Endothelial cell of umbilical vein (primary cell): ENCODE measurements at regions of chr2 and their contacts with region 1.

Region 1: DNA sequence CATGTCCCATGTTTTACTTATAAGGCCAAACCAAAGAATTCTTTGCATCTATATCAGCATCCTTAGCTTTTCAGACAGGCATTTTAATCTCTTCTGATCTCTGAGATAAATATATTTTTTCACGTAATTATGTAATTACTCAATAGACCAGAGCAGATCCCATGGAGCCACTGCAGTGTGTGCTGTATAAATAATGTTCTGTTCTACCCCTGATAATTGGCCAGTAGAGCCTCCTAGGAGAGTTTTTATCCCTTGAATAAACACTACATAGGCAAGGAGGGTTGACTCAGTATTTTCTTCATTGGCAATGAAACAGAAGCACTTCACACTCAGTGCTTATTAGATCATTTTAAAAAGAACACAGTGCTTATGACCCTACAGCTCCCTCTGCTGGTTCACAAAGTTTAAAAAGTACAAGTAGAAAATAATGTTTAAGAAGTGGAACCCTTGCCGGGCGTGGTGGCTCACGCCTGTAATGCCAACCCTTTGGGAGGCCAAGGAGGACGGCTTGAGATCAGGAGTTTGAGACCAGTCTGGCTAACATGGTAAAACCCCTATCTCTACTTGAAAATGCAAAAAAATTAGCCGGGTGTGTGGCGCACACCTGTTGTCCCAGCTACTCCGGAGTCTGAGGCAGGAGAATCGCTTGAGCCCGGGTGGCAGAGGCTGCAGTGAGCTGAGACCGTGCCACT is 91.9 kb downstream of the PPP1R1C start:
- DNase-seq: peak; percentile 84
- H3K4me3 ChIP-seq: no peak overlapping the region
- H3K27ac ChIP-seq: no peak overlapping the region
- H3K4me1 ChIP-seq: peaks cover 3% of the 10 kb centered on the region
- H3K27me3 ChIP-seq: no peaks in the 10 kb centered on the region
- CTCF ChIP-seq: peak; percentile 40 to 45
- POLR2A ChIP-seq: no peak

Region 2: DNA sequence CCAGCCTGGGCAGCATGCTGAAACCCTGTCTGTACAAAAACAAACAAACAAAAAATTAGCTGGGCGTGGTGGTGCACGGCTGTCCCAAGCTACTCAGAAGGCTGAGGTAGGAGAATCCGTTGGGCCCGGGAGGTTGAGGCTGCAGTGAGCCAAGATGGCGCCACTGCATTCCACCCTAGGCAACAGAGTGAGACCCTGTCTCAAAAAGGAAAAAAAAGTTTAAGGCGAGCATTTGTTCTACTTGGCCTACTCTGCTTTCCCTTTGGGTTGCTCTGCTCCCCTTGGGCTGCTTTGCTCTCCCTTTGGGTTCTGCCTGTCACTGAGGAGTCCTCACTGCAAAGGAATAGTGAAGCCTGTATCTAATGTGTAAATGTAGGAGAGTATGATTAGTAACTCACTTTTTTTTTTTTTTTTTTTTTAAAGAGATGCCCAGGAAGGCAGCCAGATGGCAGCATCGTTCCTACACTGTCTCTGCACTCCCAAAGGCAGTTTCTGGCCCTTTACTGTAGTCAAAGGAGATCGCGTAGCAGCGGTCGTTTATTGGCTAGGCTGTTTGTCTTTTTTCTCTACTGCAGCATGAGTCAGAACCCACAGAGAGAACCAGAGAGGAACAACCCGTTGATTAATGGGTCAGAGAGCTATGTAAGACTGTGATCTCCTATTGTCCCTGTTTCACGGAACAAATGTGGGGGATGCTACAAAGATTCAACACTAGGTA is 1952.2 kb before region 1 on chr2:
- CTCF ChIA-PET with region 1: interaction called, 13 read pairs
- POLR2A ChIA-PET with region 1: no interaction called
- dilution Hi-C with region 1: no loop called
- intact Hi-C with region 1: no loop called
- DNase-seq: peak; percentile 80
- H3K4me3 ChIP-seq: no peak overlapping the region
- H3K27ac ChIP-seq: no peak overlapping the region
- H3K4me1 ChIP-seq: no peaks in the 10 kb centered on the region
- H3K27me3 ChIP-seq: peaks cover 4 to 12% of the 10 kb centered on the region in 2 experiments
- CTCF ChIP-seq: peak; percentile 38 to 55
- POLR2A ChIP-seq: no peak

Region 3: GRCh38 chr2:181738074-181738473 is 339.5 kb before region 1 on chr2:
- CTCF ChIA-PET with region 1: interaction called, 69 read pairs
- POLR2A ChIA-PET with region 1: no interaction called
- dilution Hi-C with region 1: no loop called
- intact Hi-C with region 1: loop called (anchors 1 kb)
- DNase-seq: peak; percentile 28
- H3K4me3 ChIP-seq: no peak overlapping the region
- H3K27ac ChIP-seq: no peak overlapping the region
- H3K4me1 ChIP-seq: peaks cover 2% of the 10 kb centered on the region
- H3K27me3 ChIP-seq: no peaks in the 10 kb centered on the region
- CTCF ChIP-seq: peak; percentile 19 to 20
- POLR2A ChIP-seq: no peak

Region 4: GRCh38 chr2:181916726-181917718 is 160.6 kb before region 1 on chr2:
- CTCF ChIA-PET with region 1: interaction called, 26 read pairs
- POLR2A ChIA-PET with region 1: no interaction called
- dilution Hi-C with region 1: no loop called
- intact Hi-C with region 1: no loop called
- DNase-seq: peak; percentile 79
- H3K4me3 ChIP-seq: no peak overlapping the region
- H3K27ac ChIP-seq: peak overlapping the region; percentile 14
- H3K4me1 ChIP-seq: peaks cover 38% of the 10 kb centered on the region
- H3K27me3 ChIP-seq: no peaks in the 10 kb centered on the region
- CTCF ChIP-seq: no peak
- POLR2A ChIP-seq: no peak

Region 5: DNA sequence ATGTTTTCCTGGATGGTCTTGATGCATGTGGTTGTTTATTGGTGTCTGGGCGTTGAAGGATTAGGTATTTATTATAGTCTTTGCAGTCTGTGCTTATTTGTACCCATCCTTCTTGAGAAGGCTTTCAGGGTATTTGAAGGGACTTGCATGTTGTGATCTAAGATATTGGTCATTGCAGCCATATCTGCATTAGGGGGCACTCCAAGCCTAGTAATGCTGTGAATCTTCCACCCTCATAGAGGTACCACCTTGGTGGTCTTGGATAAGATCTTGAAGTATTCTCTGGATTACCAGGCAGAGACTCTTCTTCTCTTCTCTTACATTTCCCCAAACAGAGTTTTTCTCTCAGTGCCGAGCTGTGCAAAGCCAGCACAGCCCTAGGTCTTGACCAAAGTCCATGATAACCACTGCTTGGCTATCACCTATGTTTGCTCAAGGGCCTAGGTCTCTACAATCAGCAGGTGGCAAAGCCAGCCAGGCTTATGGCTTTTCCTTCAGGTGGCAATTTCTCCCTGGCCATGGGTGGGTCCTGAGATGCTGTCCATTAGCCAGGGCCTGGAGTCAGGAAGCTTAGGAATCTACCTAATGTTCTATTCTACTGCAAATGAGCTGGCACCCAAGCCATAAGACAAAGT is 107.3 kb before region 1 on chr2:
- CTCF ChIA-PET with region 1: interaction called, 3 read pairs
- POLR2A ChIA-PET with region 1: no interaction called
- dilution Hi-C with region 1: no loop called
- intact Hi-C with region 1: loop called (anchors 5 kb)
- DNase-seq: no peak
- H3K4me3 ChIP-seq: no peak overlapping the region
- H3K27ac ChIP-seq: no peak overlapping the region
- H3K4me1 ChIP-seq: no peaks in the 10 kb centered on the region
- H3K27me3 ChIP-seq: no peaks in the 10 kb centered on the region
- CTCF ChIP-seq: no peak
- POLR2A ChIP-seq: no peak

Region 6: DNA sequence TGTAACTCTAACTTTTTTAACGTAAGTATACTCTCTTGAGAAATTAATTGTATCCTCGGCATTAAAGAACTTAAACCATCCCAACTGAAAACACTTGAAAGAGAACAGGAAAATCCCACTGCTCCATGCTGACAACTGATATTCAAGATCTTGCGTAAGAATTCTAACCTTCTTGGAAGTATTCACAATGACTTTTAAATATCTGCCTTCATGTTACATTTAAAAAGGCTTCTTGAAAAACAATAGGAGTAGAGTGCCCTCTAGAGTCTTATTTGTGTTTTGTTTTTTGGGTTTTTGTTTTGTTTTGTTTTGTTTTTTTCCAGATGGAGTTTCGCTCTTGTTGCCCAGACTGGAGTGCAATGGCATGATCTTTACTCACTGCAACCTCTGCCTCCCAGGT is 573.1 kb after region 1 on chr2:
- CTCF ChIA-PET with region 1: interaction called, 15 read pairs
- POLR2A ChIA-PET with region 1: no interaction called
- dilution Hi-C with region 1: no loop called
- intact Hi-C with region 1: loop called (anchors 2 kb)
- DNase-seq: peak; percentile 67
- H3K4me3 ChIP-seq: no peak overlapping the region
- H3K27ac ChIP-seq: no peak overlapping the region
- H3K4me1 ChIP-seq: no peaks in the 10 kb centered on the region
- H3K27me3 ChIP-seq: no peaks in the 10 kb centered on the region
- CTCF ChIP-seq: peak; percentile 15 to 30
- POLR2A ChIP-seq: no peak